ENCODE measurements at regions of chr12 and their contacts with region 1.

Region 1: DNA sequence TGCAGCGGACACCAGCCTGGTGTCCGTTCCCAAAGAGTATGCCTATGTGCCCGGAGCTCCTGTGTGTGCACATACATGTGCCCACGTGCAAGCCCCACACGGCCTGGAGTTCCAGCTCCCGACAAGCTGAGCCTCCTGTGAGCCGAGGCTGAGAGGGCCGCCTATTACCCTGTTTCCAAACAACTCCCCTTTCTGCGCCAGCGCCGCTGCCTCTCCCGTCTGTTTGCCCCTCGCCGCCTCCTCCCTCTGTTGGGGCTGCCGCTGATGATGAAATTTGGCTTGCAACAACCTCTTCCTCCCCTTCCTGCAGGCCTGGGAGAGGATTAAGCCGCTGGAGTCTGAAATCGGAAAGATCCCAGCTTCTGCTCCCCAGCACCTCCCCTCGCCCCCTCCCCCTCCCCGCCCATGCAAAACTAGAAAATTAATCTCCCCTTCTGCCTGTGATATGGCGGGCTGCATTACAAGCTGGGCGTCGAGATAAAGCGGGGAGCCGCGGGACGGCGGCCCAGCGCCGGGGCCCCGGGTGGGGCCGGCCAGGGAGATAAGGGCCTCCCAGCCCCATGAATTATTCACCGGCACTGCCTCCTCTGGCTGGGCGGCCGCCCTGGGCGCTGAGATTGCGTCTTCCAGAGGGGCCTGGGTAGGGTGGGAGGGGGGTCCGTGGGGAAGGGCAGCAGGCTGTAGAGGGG is 6.8 kb upstream of the ASIC1 start:
- DNase-seq: no peak
- ATAC-seq: peak; percentile 27
- H3K4me3 Mint-ChIP-seq: no peak overlapping the region
- H3K27ac Mint-ChIP-seq: no peak overlapping the region
- H3K4me1 Mint-ChIP-seq: peaks cover under 1% of the 10 kb centered on the region
- H3K27me3 Mint-ChIP-seq: peaks cover 32% of the 10 kb centered on the region
- CTCF ChIP-seq: no peak

Region 2: DNA sequence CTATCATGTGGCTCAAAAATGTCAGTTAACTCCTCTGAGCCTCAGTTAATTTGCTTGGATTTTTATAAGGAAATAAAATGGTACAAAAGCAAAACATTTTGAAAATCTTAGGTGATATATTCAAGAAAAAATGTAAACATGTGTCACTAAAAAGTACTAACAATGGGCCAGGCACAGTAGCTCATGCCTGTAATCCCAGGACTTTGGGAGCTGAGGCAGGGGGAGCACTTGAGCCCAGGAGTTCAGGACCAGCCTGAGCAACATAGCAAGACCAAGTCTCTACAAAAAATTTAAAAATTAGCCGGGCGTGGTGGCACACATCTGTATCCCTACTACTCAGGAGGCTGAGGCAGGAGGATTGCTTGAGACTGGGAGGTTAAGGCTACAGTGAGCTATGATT is 52.1 kb before region 1 on chr12:
- CTCF ChIA-PET with region 1: no interaction called
- POLR2A ChIA-PET with region 1: no interaction called
- intact Hi-C with region 1: no loop called
- DNase-seq: no peak
- ATAC-seq: no peak
- H3K4me3 Mint-ChIP-seq: no peak overlapping the region
- H3K27ac Mint-ChIP-seq: no peak overlapping the region
- H3K4me1 Mint-ChIP-seq: no peaks in the 10 kb centered on the region
- H3K27me3 Mint-ChIP-seq: no peaks in the 10 kb centered on the region
- CTCF ChIP-seq: no peak

Region 3: GRCh38 chr12:50074936-50075807 is 24.6 kb after region 1 on chr12:
- CTCF ChIA-PET with region 1: interaction called, 32 read pairs
- POLR2A ChIA-PET with region 1: no interaction called
- intact Hi-C with region 1: no loop called
- DNase-seq: peak; percentile 86
- ATAC-seq: peak; percentile 99
- H3K4me3 Mint-ChIP-seq: no peak overlapping the region
- H3K27ac Mint-ChIP-seq: no peak overlapping the region
- H3K4me1 Mint-ChIP-seq: peaks cover 4% of the 10 kb centered on the region
- H3K27me3 Mint-ChIP-seq: no peaks in the 10 kb centered on the region
- CTCF ChIP-seq: peak; percentile 91

Measured in activated CD8-positive, alpha-beta T cell treated with anti-CD3 and anti-CD28 coated beads for 36 hours (primary cell).